Motor neuron (in vitro differentiated cells): ENCODE measurements at regions of chr15 and their contacts with region 1.

Region 1: DNA sequence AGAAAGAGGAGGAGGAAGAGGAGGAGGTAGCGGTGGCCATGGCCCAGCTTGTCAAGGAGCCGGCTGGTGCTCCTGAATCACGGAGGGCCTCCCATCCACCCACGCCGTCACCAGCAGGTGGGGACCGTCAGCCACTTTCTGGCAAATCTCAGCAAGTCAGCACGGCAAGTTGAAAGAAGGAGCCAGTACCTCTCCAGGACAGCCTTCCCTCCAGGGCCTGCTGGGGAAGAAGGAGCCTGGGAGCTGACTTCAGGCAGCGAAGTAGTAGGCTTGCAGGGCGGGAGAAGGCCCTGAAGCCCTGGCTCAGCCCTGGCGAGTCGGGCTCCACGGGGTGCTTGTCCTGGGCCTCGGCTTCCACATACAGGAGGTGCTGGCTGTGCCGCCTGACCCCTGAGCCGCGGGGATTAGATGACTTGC is 99.2 kb upstream of the TRPM1 start:
- ATAC-seq: peak; percentile 27 to 88 (median 76)
- H3K4me3 ChIP-seq: no peak overlapping the region
- H3K27ac ChIP-seq: no peak overlapping the region
- H3K4me1 ChIP-seq: peaks cover 0 to 6% of the 10 kb centered on the region in 2 donors

Region 2: GRCh38 chr15:31338879-31339557 is 138.3 kb after region 1 on chr15:
- in situ Hi-C with region 1: loop called in 1 of 9 experiments (anchors 10 kb)
- ATAC-seq: peak; percentile 60 to 90 (median 80)
- H3K4me3 ChIP-seq: no peak overlapping the region
- H3K27ac ChIP-seq: no peak overlapping the region
- H3K4me1 ChIP-seq: peaks cover 7 to 21% of the 10 kb centered on the region in 2 donors

Region 3: GRCh38 chr15:31435261-31435911 is 234.6 kb after region 1 on chr15:
- in situ Hi-C with region 1: loop called in 1 of 9 experiments (anchors 25 kb)
- ATAC-seq: peak; percentile 60 to 98 (median 92)
- H3K4me3 ChIP-seq: no peak overlapping the region
- H3K27ac ChIP-seq: no peak overlapping the region
- H3K4me1 ChIP-seq: peaks cover 12 to 14% of the 10 kb centered on the region in 2 donors